Activated B cell treated with CpG ODN at 0.5 μM for 24 hours (primary cell): ENCODE measurements at regions of chr10 and their contacts with region 1.

Region 1: GRCh38 chr10:1661859-1662437 is 75.4 kb downstream of the ADARB2 start:
- DNase-seq: peak; percentile 59
- ATAC-seq: peak; percentile 90
- H3K4me3 Mint-ChIP-seq: peak overlapping the region; percentile 67
- H3K27ac Mint-ChIP-seq: peak overlapping the region; percentile 72
- H3K4me1 Mint-ChIP-seq: peaks cover 51% of the 10 kb centered on the region
- H3K27me3 Mint-ChIP-seq: peaks cover 12% of the 10 kb centered on the region
- CTCF ChIP-seq: no peak

Region 2: GRCh38 chr10:1420661-1421362 is 241.1 kb before region 1 on chr10:
- CTCF ChIA-PET with region 1: no interaction called
- POLR2A ChIA-PET with region 1: interaction called, 3 read pairs
- intact Hi-C with region 1: loop called (anchors 1 kb)
- DNase-seq: peak; percentile 71
- ATAC-seq: peak; percentile 85
- H3K4me3 Mint-ChIP-seq: peak overlapping the region; percentile 65
- H3K27ac Mint-ChIP-seq: peak overlapping the region; percentile 47
- H3K4me1 Mint-ChIP-seq: peaks cover 60% of the 10 kb centered on the region
- H3K27me3 Mint-ChIP-seq: no peaks in the 10 kb centered on the region
- CTCF ChIP-seq: peak; percentile 98

Region 3: GRCh38 chr10:1488969-1489548 is 172.9 kb before region 1 on chr10:
- CTCF ChIA-PET with region 1: no interaction called
- POLR2A ChIA-PET with region 1: interaction called, 4 read pairs
- intact Hi-C with region 1: loop called (anchors 1 kb)
- DNase-seq: peak; percentile 52
- ATAC-seq: peak; percentile 90
- H3K4me3 Mint-ChIP-seq: peak overlapping the region; percentile 56
- H3K27ac Mint-ChIP-seq: peak overlapping the region; percentile 85
- H3K4me1 Mint-ChIP-seq: peaks cover 62% of the 10 kb centered on the region
- H3K27me3 Mint-ChIP-seq: no peaks in the 10 kb centered on the region
- CTCF ChIP-seq: no peak

Region 4: GRCh38 chr10:1643161-1643907 is 18.6 kb before region 1 on chr10:
- CTCF ChIA-PET with region 1: no interaction called
- POLR2A ChIA-PET with region 1: interaction called, 9 read pairs
- intact Hi-C with region 1: loop called (anchors 1 kb)
- DNase-seq: no peak
- ATAC-seq: peak; percentile 87
- H3K4me3 Mint-ChIP-seq: peak overlapping the region; percentile 17
- H3K27ac Mint-ChIP-seq: peak overlapping the region; percentile 14
- H3K4me1 Mint-ChIP-seq: peaks cover 10% of the 10 kb centered on the region
- H3K27me3 Mint-ChIP-seq: peaks cover 12% of the 10 kb centered on the region
- CTCF ChIP-seq: no peak

Region 5: GRCh38 chr10:1674501-1674900 is 12.6 kb after region 1 on chr10:
- CTCF ChIA-PET with region 1: no interaction called
- POLR2A ChIA-PET with region 1: no interaction called
- intact Hi-C with region 1: loop called (anchors 1 kb)
- DNase-seq: no peak
- ATAC-seq: peak; percentile 73
- H3K4me3 Mint-ChIP-seq: peak overlapping the region; percentile 9
- H3K27ac Mint-ChIP-seq: peak overlapping the region; percentile 67
- H3K4me1 Mint-ChIP-seq: peaks cover 20% of the 10 kb centered on the region
- H3K27me3 Mint-ChIP-seq: peaks cover 11% of the 10 kb centered on the region
- CTCF ChIP-seq: no peak

Region 6: DNA sequence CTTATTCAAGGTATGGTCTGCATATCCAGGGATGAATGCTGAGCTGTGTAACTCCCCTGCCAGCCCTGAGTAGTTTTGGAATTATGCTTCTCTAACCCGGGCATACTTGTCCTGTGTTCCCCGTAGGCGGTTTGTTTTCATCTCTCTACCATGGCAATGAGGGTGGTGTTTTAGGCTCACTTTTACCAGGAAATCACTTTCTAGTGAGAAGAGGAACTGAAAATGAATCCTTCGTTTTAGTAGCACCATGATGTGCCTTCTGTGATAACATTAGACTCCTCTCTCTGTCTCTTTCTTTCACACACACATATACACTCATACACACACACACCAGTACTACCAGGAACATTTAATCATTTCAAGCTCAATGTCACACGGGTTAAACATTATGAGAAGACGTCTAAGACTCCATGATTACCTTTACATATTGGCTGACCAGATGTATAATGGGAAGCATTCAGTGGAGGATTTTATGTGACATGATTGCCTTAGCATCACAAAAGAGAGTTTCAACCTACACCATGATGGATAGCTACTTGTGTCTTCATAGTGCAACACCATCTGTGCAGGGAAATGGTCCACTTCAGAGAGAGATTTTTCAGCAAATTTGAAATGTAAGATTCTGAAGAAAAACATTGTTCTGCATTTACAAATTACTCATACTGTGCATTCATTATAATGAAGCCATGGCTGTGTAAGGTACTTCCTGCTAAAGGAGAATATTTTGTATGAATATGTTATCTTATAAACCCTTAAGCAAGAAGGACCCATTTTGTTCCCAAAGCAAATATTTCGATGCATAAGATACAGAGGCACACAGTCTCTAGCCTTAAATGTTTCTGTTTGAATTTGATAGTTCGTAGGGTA is 1374.4 kb after region 1 on chr10:
- CTCF ChIA-PET with region 1: no interaction called
- POLR2A ChIA-PET with region 1: no interaction called
- intact Hi-C with region 1: loop called (anchors 5 kb)
- DNase-seq: no peak
- ATAC-seq: peak; percentile 90
- H3K4me3 Mint-ChIP-seq: peak overlapping the region; percentile 25
- H3K27ac Mint-ChIP-seq: peak overlapping the region; percentile 78
- H3K4me1 Mint-ChIP-seq: peaks cover 45% of the 10 kb centered on the region
- H3K27me3 Mint-ChIP-seq: no peaks in the 10 kb centered on the region
- CTCF ChIP-seq: no peak